MCF 10A (cell line): ENCODE measurements at regions of chr5 and their contacts with region 1.

Region 1: GRCh38 chr5:141960449-141961202 is 2.6 kb upstream of the PCDH12 start:
- DNase-seq: peak; percentile 96
- H3K4me3 Mint-ChIP-seq: no peak overlapping the region
- H3K27ac Mint-ChIP-seq: peak overlapping the region; percentile 68
- H3K4me1 Mint-ChIP-seq: peaks cover 19% of the 10 kb centered on the region
- H3K27me3 Mint-ChIP-seq: no peaks in the 10 kb centered on the region
- CTCF ChIP-seq: peak; percentile 87

Region 2: DNA sequence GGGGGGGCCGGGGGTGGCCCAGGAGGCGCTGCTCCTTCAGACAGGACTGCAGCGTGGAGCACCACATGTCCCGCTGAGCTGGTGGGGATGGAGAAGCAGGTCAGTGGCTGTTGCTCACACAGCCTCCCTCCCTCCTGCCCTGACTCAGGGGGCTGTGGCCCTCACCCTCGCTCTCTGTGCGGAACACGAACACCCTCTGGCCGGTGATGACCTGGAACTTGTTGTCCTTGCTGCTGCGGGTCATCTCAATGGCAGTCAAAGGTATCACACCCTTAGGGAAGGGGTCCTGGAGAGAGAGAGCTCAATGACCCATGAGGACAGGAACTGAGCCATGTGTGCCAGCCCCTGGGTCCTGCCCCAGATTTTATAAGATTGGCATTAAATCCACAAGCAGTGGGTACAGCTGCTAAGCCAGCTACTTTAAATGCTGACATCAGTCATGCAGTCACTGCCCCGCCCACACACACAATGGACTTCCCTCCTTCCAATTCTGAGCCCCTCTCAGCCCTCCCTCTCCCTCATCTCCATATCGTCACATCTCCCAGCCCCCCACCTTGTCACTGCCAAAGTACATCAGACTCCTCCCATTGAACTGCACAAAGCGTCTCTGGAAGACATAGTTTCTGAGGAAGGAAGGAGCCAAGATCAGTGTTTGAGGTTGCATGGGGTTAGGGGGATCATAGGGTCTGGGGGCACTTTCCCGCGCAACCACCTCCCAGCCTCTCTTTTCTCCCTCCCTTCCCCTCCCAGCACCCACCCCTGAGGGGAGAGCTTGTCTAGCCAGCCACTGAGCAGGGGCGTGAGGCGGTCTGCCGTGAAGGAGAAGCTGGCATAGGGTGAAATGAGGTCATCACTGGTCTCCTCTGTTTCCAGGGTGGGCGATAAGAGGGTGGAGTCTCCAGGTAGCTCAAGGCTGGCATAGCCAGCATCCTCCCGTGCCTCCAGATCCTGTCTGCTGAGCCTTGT is 287.5 kb before region 1 on chr5:
- CTCF ChIA-PET with region 1: interaction called, 17 read pairs
- POLR2A ChIA-PET with region 1: interaction called, 3 read pairs
- intact Hi-C with region 1: no loop called
- DNase-seq: no peak
- H3K4me3 Mint-ChIP-seq: no peak overlapping the region
- H3K27ac Mint-ChIP-seq: no peak overlapping the region
- H3K4me1 Mint-ChIP-seq: no peaks in the 10 kb centered on the region
- H3K27me3 Mint-ChIP-seq: no peaks in the 10 kb centered on the region
- CTCF ChIP-seq: no peak

Region 3: DNA sequence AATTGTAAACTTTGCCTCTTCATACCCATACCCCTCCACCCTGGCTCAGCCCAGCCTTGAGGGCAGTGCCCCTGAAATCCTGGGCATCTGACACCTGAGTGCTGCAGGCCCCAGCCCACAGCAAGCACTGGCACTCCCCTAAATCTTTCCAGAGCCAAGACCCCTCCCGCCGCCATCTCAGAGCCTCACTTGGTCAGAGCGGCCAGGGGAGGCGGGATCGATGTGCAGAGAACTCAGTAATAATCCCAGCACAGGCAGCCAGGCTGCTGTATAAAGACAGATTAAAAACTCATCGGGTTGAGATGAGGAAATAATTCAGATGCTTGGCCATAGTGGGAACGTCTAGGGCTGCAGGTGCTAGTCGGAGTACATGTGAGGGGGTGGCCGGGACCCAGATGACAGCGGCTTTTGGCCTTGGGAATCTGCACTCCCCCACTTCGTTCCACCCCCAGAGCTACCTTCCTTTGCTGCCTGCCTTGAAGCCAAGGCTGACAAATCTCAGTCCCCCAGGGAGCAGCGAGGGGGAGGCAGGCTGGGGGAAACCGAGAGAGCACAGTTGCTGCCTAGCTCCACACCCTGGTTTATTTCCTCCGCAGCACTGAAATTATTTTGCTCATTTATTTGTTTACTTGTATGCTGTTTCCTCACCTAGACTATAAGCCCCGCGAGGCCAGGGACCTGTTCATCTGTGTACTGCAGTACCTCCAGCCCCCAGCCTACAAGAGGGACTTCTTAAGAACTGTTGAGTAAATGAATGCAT is 259.1 kb before region 1 on chr5:
- CTCF ChIA-PET with region 1: interaction called, 395 read pairs
- POLR2A ChIA-PET with region 1: interaction called, 7 read pairs
- intact Hi-C with region 1: no loop called
- DNase-seq: no peak
- H3K4me3 Mint-ChIP-seq: no peak overlapping the region
- H3K27ac Mint-ChIP-seq: no peak overlapping the region
- H3K4me1 Mint-ChIP-seq: no peaks in the 10 kb centered on the region
- H3K27me3 Mint-ChIP-seq: peaks cover 19% of the 10 kb centered on the region
- CTCF ChIP-seq: no peak

Region 4: DNA sequence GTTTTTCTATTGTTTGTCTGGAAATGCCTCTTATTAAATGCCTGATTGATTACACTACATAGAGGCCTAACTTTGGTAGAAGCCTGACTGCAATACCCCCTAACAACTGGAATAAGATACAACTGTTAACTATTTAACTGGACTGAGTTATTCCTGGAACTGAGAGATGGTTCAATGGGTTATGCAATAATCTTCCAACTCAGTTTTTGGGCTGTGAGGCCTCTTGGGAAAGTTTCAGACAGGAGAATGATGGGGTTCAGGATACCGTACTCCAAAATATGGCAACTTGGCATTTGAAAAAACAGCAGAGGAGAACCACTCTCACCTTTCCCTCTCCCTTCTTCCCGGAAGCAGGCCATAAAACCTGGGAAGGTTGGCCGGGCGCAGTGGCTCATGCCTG is 63.2 kb before region 1 on chr5:
- CTCF ChIA-PET with region 1: interaction called, 519 read pairs
- POLR2A ChIA-PET with region 1: interaction called, 25 read pairs
- intact Hi-C with region 1: no loop called
- DNase-seq: no peak
- H3K4me3 Mint-ChIP-seq: no peak overlapping the region
- H3K27ac Mint-ChIP-seq: no peak overlapping the region
- H3K4me1 Mint-ChIP-seq: no peaks in the 10 kb centered on the region
- H3K27me3 Mint-ChIP-seq: peaks cover 30% of the 10 kb centered on the region
- CTCF ChIP-seq: no peak

Region 5: DNA sequence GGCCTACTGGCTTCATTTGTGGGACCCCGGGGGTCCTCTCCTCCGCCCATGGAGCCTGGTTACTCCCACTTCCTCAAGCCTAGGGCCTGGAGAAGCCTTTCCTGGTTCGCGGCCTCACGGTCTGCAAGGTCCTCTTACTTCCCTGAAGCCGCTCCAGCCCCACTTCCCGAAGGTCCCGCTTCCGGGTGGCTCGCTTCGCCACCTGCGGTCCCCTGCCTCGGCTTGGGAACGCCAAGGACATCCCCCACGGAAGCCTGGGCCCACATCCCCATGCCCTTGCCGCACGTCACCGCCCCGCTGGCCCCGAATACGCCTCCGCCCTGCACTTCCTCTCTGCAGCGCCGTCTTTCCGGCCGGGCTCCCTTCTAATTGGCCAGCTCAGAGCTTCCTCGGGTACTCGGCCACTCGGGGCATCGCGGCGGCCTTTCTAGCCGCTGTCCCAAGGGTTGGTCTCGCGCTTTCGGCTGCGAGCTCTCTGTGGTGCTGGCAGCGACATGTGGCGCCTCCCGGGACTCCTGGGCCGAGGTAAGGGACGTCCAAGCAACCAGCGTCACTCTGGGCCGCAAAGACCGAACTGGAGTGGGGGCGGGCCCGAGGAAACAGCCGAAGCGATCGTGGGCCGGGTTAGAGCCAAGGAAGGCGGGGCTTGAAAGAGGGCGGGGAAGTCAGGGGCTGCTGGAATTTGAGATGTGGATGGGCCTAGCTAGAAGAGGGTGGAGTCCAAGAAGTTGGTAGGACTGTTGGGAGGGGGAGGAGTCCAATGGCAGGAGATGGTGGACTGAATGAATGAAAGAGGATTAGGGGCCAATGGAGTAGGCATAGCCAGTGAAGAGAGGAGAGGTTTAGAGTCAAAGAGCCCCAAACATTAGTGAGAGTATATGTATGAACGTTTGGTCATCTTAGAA is 36.9 kb before region 1 on chr5 and contains the start of gene DELE1:
- CTCF ChIA-PET with region 1: interaction called, 44 read pairs
- POLR2A ChIA-PET with region 1: interaction called, 16 read pairs
- intact Hi-C with region 1: no loop called
- DNase-seq: peak; percentile 98
- H3K4me3 Mint-ChIP-seq: peak within 1 kb of the TSS; percentile 75
- H3K27ac Mint-ChIP-seq: peak within 1 kb of the TSS; percentile 94
- H3K4me1 Mint-ChIP-seq: peaks cover 11% of the 10 kb centered on the region
- H3K27me3 Mint-ChIP-seq: no peaks in the 10 kb centered on the region
- CTCF ChIP-seq: no peak
- total RNA-seq, gene DELE1: 88.1 and 91.3 TPM in 2 replicates

Region 6: GRCh38 chr5:141976176-141976575 is 15.6 kb after region 1 on chr5:
- CTCF ChIA-PET with region 1: interaction called, 102 read pairs
- POLR2A ChIA-PET with region 1: interaction called, 48 read pairs
- intact Hi-C with region 1: no loop called
- DNase-seq: no peak
- H3K4me3 Mint-ChIP-seq: no peak overlapping the region
- H3K27ac Mint-ChIP-seq: peak overlapping the region; percentile 6
- H3K4me1 Mint-ChIP-seq: peaks cover 13% of the 10 kb centered on the region
- H3K27me3 Mint-ChIP-seq: no peaks in the 10 kb centered on the region
- CTCF ChIP-seq: no peak